SK-N-SH (cell line): ENCODE measurements at regions of chr16 and their contacts with region 1.

Region 1: DNA sequence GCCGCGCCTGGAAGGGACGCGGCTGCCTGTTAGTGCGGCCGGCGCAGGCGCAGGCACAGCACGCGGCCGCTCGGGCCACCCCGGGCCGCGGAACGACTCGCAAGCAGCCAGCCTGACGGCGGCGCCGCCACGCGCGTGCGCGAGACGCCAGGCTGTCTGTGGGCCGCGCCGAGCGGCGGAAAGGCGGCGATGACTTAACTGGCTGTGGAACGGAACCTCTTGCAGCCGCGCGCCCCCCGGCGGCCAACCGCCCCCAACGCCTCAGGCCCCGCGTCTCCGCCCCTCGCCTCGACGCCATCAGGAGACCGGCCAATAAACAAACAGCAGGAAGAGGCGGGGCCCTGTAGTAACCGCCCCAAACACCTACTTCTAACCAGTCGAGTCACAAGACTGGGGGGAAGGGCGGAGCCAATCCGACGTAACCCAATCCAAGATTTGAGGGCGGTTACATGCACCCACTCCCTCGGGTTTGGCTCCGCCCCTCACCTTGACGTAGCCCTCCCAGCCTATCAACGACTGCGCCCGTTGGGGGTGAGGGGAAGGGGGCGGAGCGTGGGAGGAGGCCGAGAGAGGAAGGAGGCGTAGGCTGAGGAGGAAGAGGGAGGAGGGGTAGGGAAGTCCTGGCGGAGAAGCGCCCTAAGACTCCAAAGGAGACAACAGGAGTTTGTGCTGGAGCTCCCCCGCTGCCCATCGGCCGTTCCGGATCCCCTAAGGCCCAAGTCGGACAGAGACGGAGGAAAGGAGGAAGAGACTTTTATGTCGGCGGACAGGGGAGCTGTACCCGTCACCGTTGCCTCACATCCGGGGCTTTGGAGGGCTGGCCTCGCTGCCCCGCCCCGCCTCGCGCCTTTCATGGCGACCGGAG is at the start of gene FBRS:
- DNase-seq: peak; percentile 96
- H3K4me3 ChIP-seq: peak within 1 kb of the TSS; percentile 87 to 91
- H3K27ac ChIP-seq: peak within 1 kb of the TSS; percentile 99
- H3K4me1 ChIP-seq: peaks cover 9 to 27% of the 10 kb centered on the region in 2 experiments; a peak in 2 of 4 replicates
- H3K27me3 ChIP-seq: no peaks in the 10 kb centered on the region
- CTCF ChIP-seq: peak; percentile 81
- EP300 ChIP-seq: no peak
- RAD21 ChIP-seq: peak; percentile 68
- polyA plus RNA-seq, gene FBRS: 9.6 and 11.5 TPM in 2 replicates

Region 2: DNA sequence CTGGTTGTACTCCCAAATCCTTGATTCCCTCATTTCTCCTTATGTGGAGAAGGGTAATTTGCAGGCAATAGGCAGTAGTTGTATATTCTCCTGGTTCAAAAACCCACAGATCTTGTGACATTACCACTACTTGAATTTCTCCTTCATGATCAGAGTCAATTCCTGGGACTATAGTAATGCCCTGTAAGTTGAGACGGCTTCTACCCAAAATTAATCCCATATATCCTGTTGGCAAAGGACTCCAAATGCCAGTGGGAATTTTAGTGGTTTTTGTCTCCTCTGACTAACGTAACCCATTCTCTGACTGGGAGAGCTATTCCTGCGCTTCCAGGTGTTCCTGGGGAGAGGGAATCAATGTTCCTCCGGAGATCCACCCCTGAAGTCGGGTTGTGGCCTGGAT is 36.3 kb before region 1 on chr16:
- CTCF ChIA-PET with region 1: no interaction called
- POLR2A ChIA-PET with region 1: no interaction called
- DNase-seq: no peak
- H3K4me3 ChIP-seq: no peak overlapping the region
- H3K27ac ChIP-seq: no peak overlapping the region
- H3K4me1 ChIP-seq: no peaks in the 10 kb centered on the region
- H3K27me3 ChIP-seq: no peaks in the 10 kb centered on the region
- CTCF ChIP-seq: no peak
- EP300 ChIP-seq: no peak
- RAD21 ChIP-seq: no peak

Region 3: GRCh38 chr16:30669896-30670797 is 12.0 kb after region 1 on chr16:
- CTCF ChIA-PET with region 1: interaction called, 11 read pairs
- POLR2A ChIA-PET with region 1: no interaction called
- DNase-seq: no peak
- H3K4me3 ChIP-seq: no peak overlapping the region
- H3K27ac ChIP-seq: no peak overlapping the region
- H3K4me1 ChIP-seq: no peaks in the 10 kb centered on the region
- H3K27me3 ChIP-seq: no peaks in the 10 kb centered on the region
- CTCF ChIP-seq: no peak; the same call in 1 of the 2 replicates
- EP300 ChIP-seq: no peak
- RAD21 ChIP-seq: no peak

Region 4: DNA sequence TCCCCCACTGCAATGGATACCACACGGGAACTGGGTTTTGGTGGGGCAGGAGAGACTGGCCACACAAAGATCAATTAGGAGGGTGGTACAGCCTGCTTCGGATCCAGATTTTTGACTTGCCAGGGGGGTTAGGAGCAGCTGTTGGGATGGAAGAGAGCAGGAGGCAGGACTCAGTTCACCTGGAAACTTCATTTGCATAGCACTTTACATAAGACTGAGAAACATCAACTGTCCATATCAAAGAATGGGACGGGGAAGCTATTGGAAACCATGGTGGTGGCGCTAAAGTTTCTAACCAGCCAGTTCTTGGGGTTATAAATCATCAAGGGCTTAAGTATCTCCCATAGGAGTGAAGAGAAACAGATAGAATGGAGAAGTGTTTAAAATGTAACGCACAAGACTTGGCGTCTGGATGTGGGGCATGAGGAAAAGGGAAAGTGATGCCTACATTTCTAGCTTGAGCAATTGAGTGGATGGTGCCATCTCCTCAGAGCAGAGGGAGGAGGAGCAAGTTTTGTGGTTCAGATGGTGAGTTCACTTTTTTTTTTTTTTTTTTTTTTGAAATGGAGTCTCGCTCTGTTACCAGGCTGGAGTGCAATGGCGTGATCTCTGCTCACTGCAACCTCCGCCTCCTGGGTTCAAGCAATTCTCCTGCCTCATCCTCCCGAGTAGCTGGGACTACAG is 34.4 kb after region 1 on chr16:
- CTCF ChIA-PET with region 1: interaction called, 30 read pairs
- POLR2A ChIA-PET with region 1: interaction called, 8 read pairs
- DNase-seq: no peak
- H3K4me3 ChIP-seq: no peak overlapping the region
- H3K27ac ChIP-seq: no peak overlapping the region
- H3K4me1 ChIP-seq: peaks cover 0 to 5% of the 10 kb centered on the region in 2 experiments; a peak in 1 of 4 replicates
- H3K27me3 ChIP-seq: no peaks in the 10 kb centered on the region
- CTCF ChIP-seq: no peak
- EP300 ChIP-seq: no peak
- RAD21 ChIP-seq: no peak

Region 5: DNA sequence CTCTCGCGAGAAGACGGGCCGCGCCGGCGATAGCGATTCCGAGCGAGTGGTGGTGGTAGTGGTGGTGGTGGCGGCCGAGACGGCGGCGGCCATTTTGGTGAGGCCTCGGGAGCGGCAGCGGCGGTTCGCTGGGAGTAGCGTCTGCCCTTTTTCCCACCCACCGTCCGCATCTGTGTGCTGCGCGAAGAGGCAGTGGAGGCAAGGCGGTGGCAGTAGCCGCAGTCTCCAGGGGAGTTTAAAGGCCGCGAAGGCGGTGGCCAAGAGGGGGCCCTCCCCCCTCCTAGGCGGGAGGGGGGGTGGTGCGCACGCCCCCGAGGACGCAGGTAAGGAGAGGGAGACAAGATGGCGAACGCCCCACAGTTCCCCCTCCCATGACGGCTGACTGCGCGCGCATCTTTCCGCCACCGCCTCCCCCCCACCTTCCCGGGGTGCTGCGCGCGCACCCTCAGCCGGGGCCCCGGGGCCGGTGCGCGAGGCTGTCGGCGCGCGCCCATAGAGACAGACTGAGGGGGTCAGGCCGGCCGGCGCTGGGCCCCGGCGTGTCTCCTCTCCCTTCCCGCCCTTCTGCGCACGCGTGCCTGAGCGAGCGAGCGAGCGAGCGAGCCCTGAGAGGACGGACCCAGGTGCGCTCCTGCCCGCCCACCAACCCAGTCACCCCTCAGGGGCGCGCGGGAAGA is 40.2 kb after region 1 on chr16:
- CTCF ChIA-PET with region 1: interaction called, 30 read pairs
- POLR2A ChIA-PET with region 1: interaction called, 8 read pairs
- DNase-seq: peak; percentile 99
- H3K4me3 ChIP-seq: peak overlapping the region; percentile 78
- H3K27ac ChIP-seq: peak overlapping the region; percentile 99 to 100
- H3K4me1 ChIP-seq: peaks cover 12 to 15% of the 10 kb centered on the region in 2 experiments
- H3K27me3 ChIP-seq: no peaks in the 10 kb centered on the region
- CTCF ChIP-seq: no peak
- EP300 ChIP-seq: 0 out of 4 replicates have a peak, but pooled peaks of 1 of the 2 experiments have one; percentile 8
- RAD21 ChIP-seq: no peak

Region 6: DNA sequence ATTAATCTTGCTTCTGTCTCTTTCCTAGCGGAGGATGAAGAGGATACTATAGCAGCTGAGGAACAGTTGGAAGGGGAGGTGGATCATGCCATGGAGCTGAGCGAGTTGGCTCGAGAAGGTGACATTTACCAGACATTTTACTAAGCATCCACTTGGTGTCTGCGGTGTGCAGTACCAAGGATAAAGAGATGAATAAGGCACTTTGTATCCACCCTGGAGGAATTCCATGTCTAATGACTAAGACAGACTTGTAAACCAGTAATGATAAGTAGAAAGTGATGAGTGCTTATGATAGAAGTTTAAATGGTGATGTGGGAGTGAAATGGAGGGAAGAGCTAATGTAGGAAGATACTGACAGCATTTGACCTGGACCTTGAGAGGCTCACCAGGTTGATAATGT is 52.9 kb after region 1 on chr16:
- CTCF ChIA-PET with region 1: no interaction called
- POLR2A ChIA-PET with region 1: no interaction called
- DNase-seq: no peak
- H3K4me3 ChIP-seq: no peak overlapping the region
- H3K27ac ChIP-seq: no peak overlapping the region
- H3K4me1 ChIP-seq: peaks cover 0 to 6% of the 10 kb centered on the region in 2 experiments; a peak in 1 of 4 replicates
- H3K27me3 ChIP-seq: no peaks in the 10 kb centered on the region
- CTCF ChIP-seq: no peak
- EP300 ChIP-seq: no peak
- RAD21 ChIP-seq: no peak